ENCODE measurements at regions of chr10 and their contacts with region 1.

Region 1: GRCh38 chr10:48564466-48565160 is 40.3 kb downstream of the ARHGAP22 start:
- DNase-seq: no peak
- H3K4me3 ChIP-seq: no peak overlapping the region
- H3K27ac ChIP-seq: no peak overlapping the region
- H3K4me1 ChIP-seq: no peaks in the 10 kb centered on the region
- CTCF ChIP-seq: no peak

Region 2: GRCh38 chr10:48577158-48577557 is 12.5 kb after region 1 on chr10:
- CTCF ChIA-PET with region 1: no interaction called
- POLR2A ChIA-PET with region 1: interaction called, 13 read pairs
- intact Hi-C with region 1: no loop called
- DNase-seq: peak; percentile 84
- H3K4me3 ChIP-seq: peak overlapping the region; percentile 21
- H3K27ac ChIP-seq: peak overlapping the region; percentile 95
- H3K4me1 ChIP-seq: peaks cover 92% of the 10 kb centered on the region
- CTCF ChIP-seq: no peak

Measured in OCI-LY7 (cell line).